ENCODE measurements at regions of chr15 and their contacts with region 1.

Region 1: GRCh38 chr15:50176869-50177268 is 5.1 kb upstream of the SLC27A2 start:
- DNase-seq: no peak
- H3K4me3 ChIP-seq: no peak overlapping the region
- H3K27ac ChIP-seq: no peak overlapping the region
- H3K4me1 ChIP-seq: no peaks in the 10 kb centered on the region
- H3K27me3 ChIP-seq: peaks cover 0 to 5% of the 10 kb centered on the region in 2 donors
- CTCF ChIP-seq: no peak
- POLR2A ChIP-seq: no peak

Region 2: GRCh38 chr15:50187997-50188396 is 11.1 kb after region 1 on chr15:
- intact Hi-C with region 1: loop called (anchors 1 kb)
- DNase-seq: no peak
- H3K4me3 ChIP-seq: no peak overlapping the region
- H3K27ac ChIP-seq: no peak overlapping the region
- H3K4me1 ChIP-seq: no peaks in the 10 kb centered on the region
- H3K27me3 ChIP-seq: no peaks in the 10 kb centered on the region
- CTCF ChIP-seq: no peak
- POLR2A ChIP-seq: no peak

Region 3: DNA sequence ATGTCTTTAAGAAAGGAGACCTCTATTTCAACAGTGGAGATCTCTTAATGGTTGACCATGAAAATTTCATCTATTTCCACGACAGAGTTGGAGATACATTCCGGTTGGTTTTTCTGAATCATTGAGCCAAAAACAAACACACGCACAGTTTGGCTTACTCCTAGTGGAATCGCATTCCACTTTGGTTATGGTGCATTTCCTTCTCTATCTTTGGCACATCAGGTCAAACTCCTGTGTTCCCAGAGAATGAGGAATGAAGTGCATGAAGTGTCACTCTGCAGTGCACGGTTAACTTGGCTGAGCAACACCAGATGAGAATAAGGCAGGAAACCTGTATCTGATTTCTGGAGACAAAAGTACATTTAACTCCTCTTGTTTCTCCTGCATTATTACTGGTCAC is 50.2 kb after region 1 on chr15:
- intact Hi-C with region 1: no loop called
- DNase-seq: no peak
- H3K4me3 ChIP-seq: no peak overlapping the region
- H3K27ac ChIP-seq: no peak overlapping the region
- H3K4me1 ChIP-seq: no peaks in the 10 kb centered on the region
- H3K27me3 ChIP-seq: no peaks in the 10 kb centered on the region
- CTCF ChIP-seq: no peak
- POLR2A ChIP-seq: no peak

Region 4: DNA sequence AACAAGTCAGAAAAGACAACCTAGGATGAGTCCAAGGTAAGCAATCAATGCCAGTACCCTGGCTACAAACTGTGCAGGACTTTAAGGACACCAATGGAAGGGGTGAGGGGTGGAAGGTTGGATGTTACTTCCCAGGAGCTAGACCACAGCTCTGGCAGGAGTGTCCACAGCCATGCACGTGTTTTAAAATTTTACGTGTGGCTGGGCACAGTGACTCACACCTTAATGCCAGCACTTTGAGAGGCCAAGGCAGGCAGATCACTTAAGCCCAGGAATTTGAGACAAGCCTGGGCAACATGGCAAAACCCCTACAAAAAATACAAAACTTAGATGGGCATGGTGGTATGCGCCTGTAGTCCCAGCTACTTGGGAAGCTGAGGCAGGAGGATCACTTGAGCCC is 103.4 kb after region 1 on chr15:
- intact Hi-C with region 1: no loop called
- DNase-seq: no peak
- H3K4me3 ChIP-seq: no peak overlapping the region
- H3K27ac ChIP-seq: no peak overlapping the region
- H3K4me1 ChIP-seq: no peaks in the 10 kb centered on the region
- H3K27me3 ChIP-seq: no peaks in the 10 kb centered on the region
- CTCF ChIP-seq: no peak
- POLR2A ChIP-seq: no peak